Uterus (tissue), 4 donors: ENCODE measurements at regions of chr1 and their contacts with region 1.

Region 1: GRCh38 chr1:157090196-157090647 is 9.4 kb downstream of the ETV3L start:
- DNase-seq: peak; percentile 88 to 90
- H3K4me3 ChIP-seq: no peak overlapping the region
- H3K27ac ChIP-seq: peak overlapping the region in 1 of 2 donors; percentile 11
- H3K4me1 ChIP-seq: no peaks in the 10 kb centered on the region
- H3K27me3 ChIP-seq: no peaks in the 10 kb centered on the region
- CTCF ChIP-seq: peak; percentile 88 to 96 (median 92)
- POLR2A ChIP-seq: no peak

Region 2: GRCh38 chr1:156852418-156852874 is 237.8 kb before region 1 on chr1:
- intact Hi-C with region 1: no loop called
- DNase-seq: peak in 1 of 2 donors; percentile 50
- H3K4me3 ChIP-seq: no peak overlapping the region
- H3K27ac ChIP-seq: no peak overlapping the region
- H3K4me1 ChIP-seq: no peaks in the 10 kb centered on the region
- H3K27me3 ChIP-seq: no peaks in the 10 kb centered on the region
- CTCF ChIP-seq: no peak
- POLR2A ChIP-seq: no peak

Region 3: DNA sequence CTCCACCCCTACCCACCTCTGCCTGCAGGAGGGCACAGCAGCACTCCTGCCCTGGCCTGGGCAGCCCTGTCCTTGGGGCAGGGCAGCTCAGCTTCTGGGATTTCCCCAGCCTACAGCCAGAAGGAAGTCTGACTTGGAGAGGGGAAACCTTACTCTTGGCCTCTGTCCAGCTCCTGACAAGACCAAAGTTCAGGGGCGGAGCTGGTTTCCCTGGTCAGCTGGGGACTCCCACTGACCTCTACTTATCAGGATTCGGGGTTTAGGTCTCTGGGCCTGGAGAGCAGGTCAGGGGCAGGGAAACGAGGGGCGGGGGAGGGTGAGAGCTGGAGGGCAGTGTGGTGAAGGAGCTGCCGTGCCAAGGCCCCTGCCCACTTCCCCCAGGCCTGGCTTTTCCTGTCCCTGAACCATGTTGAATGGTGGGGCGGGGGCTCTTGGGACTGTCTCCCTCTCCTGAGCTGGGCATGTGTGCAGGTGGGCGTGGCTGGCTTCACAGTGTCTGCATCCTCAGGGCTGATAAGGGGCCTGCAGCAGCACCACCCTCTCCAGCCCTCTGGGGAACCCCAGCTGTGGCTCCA is 64.8 kb after region 1 on chr1:
- intact Hi-C with region 1: loop called (anchors 2 kb)
- DNase-seq: peak; percentile 38 to 50
- H3K4me3 ChIP-seq: no peak overlapping the region
- H3K27ac ChIP-seq: peak overlapping the region in 1 of 2 donors; percentile 17
- H3K4me1 ChIP-seq: peaks cover 0 to 11% of the 10 kb centered on the region in 2 donors
- H3K27me3 ChIP-seq: no peaks in the 10 kb centered on the region
- CTCF ChIP-seq: no peak
- POLR2A ChIP-seq: no peak

Region 4: GRCh38 chr1:157369808-157370521 is 279.7 kb after region 1 on chr1:
- intact Hi-C with region 1: no loop called
- DNase-seq: peak in 1 of 2 donors; percentile 38
- H3K4me3 ChIP-seq: no peak overlapping the region
- H3K27ac ChIP-seq: no peak overlapping the region
- H3K4me1 ChIP-seq: no peaks in the 10 kb centered on the region
- H3K27me3 ChIP-seq: no peaks in the 10 kb centered on the region
- CTCF ChIP-seq: peak; percentile 63 to 86 (median 76)
- POLR2A ChIP-seq: no peak